CD4-positive, alpha-beta memory T cell (primary cell): ENCODE measurements at regions of chr16 and their contacts with region 1.

Region 1: GRCh38 chr16:50747207-50747956 is 5.5 kb downstream of the CYLD start:
- DNase-seq: peak; percentile 64 to 75 (median 70)
- H3K4me3 ChIP-seq: peak overlapping the region; percentile 26 to 48
- H3K4me3 Mint-ChIP-seq: peak overlapping the region; percentile 83 to 96 (median 90)
- H3K27ac ChIP-seq: peak overlapping the region; percentile 59
- H3K27ac Mint-ChIP-seq: peak overlapping the region; percentile 95 to 99 (median 97)
- H3K4me1 ChIP-seq: peaks cover 77% of the 10 kb centered on the region
- H3K4me1 Mint-ChIP-seq: peaks cover 37 to 83% (median 55%) of the 10 kb centered on the region in 4 donors
- H3K27me3 ChIP-seq: no peaks in the 10 kb centered on the region
- H3K27me3 Mint-ChIP-seq: no peaks in the 10 kb centered on the region

Region 2: GRCh38 chr16:50266337-50267091 is 480.9 kb before region 1 on chr16 and contains the start of gene ADCY7:
- CTCF ChIA-PET with region 1: no interaction called
- POLR2A ChIA-PET with region 1: interaction called, 6 read pairs
- intact Hi-C with region 1: loop called (anchors 1 kb)
- DNase-seq: peak; percentile 77 to 92 (median 80)
- H3K4me3 ChIP-seq: peak within 1 kb of the TSS; percentile 75 to 76
- H3K4me3 Mint-ChIP-seq: peak within 1 kb of the TSS; percentile 93 to 99 (median 98)
- H3K27ac ChIP-seq: peak within 1 kb of the TSS; percentile 81
- H3K27ac Mint-ChIP-seq: peak within 1 kb of the TSS; percentile 95 to 99 (median 98)
- H3K4me1 ChIP-seq: peaks cover 60% of the 10 kb centered on the region
- H3K4me1 Mint-ChIP-seq: peaks cover 40 to 84% (median 56%) of the 10 kb centered on the region in 4 donors
- H3K27me3 ChIP-seq: no peaks in the 10 kb centered on the region
- H3K27me3 Mint-ChIP-seq: no peaks in the 10 kb centered on the region
- total RNA-seq, gene ADCY7: 230 to 235 TPM

Region 3: DNA sequence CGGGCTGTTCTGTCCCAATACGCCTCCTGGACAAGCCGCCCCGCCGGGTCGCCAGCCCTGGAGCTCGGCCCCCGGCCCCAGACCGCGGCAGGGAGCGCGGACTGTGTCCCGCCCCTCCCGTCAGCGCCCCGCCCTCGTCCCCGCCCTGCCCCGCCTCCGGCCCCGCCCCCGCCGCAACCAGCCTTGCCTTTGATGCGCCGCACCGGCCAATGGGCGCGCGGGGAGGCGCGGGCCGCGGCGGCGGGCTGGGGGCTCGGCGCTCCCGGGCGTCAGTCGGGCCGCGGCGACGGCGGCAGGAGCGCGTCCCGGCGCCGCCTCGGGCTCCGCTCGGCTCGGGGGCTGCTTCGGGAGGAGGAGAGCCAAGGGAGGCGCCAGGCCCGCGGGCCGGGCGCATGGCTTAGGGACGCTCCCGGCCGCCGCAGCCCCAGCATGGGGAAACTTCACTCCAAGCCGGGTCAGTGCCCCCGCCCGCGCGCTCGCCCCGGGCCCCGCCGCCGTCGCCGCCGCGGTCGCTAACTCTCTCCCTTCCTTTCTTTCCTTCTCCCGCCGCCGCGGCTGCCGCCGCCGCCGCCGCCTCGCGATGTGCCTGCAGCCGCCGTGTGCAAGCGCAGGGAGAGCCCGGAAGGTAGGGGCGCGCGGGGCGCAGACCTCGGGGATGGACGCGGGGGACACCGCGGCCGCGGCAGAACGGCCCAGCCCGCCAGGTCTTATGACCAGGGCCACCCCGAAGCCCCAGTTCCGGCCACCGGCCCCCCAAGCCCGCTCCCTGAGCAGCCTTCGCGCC is 199.1 kb before region 1 on chr16 and contains the start of gene NKD1:
- CTCF ChIA-PET with region 1: no interaction called
- POLR2A ChIA-PET with region 1: no interaction called
- intact Hi-C with region 1: loop called (anchors 1 kb)
- DNase-seq: peak; percentile 64 to 78 (median 69)
- H3K4me3 ChIP-seq: peak within 1 kb of the TSS in 1 of 2 donors; percentile 68
- H3K4me3 Mint-ChIP-seq: peak within 1 kb of the TSS; percentile 81 to 89 (median 88)
- H3K27ac ChIP-seq: peak within 1 kb of the TSS; percentile 43
- H3K27ac Mint-ChIP-seq: peak within 1 kb of the TSS; percentile 90 to 96 (median 95)
- H3K4me1 ChIP-seq: peaks cover 30% of the 10 kb centered on the region
- H3K4me1 Mint-ChIP-seq: peaks cover 14 to 35% (median 25%) of the 10 kb centered on the region in 4 donors
- H3K27me3 ChIP-seq: no peaks in the 10 kb centered on the region
- H3K27me3 Mint-ChIP-seq: no peaks in the 10 kb centered on the region
- total RNA-seq, gene NKD1: 3.8 to 4.6 TPM

Region 4: GRCh38 chr16:50681021-50681885 is 66.1 kb before region 1 on chr16 and contains the start of gene SNX20:
- CTCF ChIA-PET with region 1: interaction called, 136 read pairs
- POLR2A ChIA-PET with region 1: interaction called, 478 read pairs
- intact Hi-C with region 1: loop called (anchors 1 kb)
- DNase-seq: peak; percentile 69 to 82 (median 76)
- H3K4me3 ChIP-seq: peak within 1 kb of the TSS; percentile 45 to 93
- H3K4me3 Mint-ChIP-seq: peak within 1 kb of the TSS; percentile 83 to 97 (median 94)
- H3K27ac ChIP-seq: peak within 1 kb of the TSS; percentile 90
- H3K27ac Mint-ChIP-seq: peak within 1 kb of the TSS; percentile 87 to 99 (median 97)
- H3K4me1 ChIP-seq: peaks cover 93% of the 10 kb centered on the region
- H3K4me1 Mint-ChIP-seq: peaks cover 69 to 95% (median 84%) of the 10 kb centered on the region in 4 donors
- H3K27me3 ChIP-seq: no peaks in the 10 kb centered on the region
- H3K27me3 Mint-ChIP-seq: no peaks in the 10 kb centered on the region
- total RNA-seq, gene SNX20: 88.9 to 90.1 TPM

Region 5: GRCh38 chr16:50719518-50720337 is 27.7 kb before region 1 on chr16:
- CTCF ChIA-PET with region 1: interaction called, 27 read pairs
- POLR2A ChIA-PET with region 1: interaction called, 9 read pairs
- intact Hi-C with region 1: loop called (anchors 1 kb)
- DNase-seq: no peak
- H3K4me3 ChIP-seq: no peak overlapping the region
- H3K4me3 Mint-ChIP-seq: no peak overlapping the region
- H3K27ac ChIP-seq: no peak overlapping the region
- H3K27ac Mint-ChIP-seq: peak overlapping the region in 3 of 7 donors; percentile 46 to 74 (median 68)
- H3K4me1 ChIP-seq: peaks cover 12% of the 10 kb centered on the region
- H3K4me1 Mint-ChIP-seq: peaks cover 12 to 35% (median 23%) of the 10 kb centered on the region in 4 donors
- H3K27me3 ChIP-seq: no peaks in the 10 kb centered on the region
- H3K27me3 Mint-ChIP-seq: no peaks in the 10 kb centered on the region